ENCODE measurements at regions of chr1 and their contacts with region 1.

Region 1: GRCh38 chr1:76547916-76548315 is 319.4 kb upstream of the ST6GALNAC5 start:
- DNase-seq: peak; percentile 58
- H3K4me3 ChIP-seq: no peak overlapping the region
- H3K27ac ChIP-seq: peak overlapping the region; percentile 11
- H3K4me1 ChIP-seq: no peaks in the 10 kb centered on the region
- H3K27me3 ChIP-seq: no peaks in the 10 kb centered on the region
- CTCF ChIP-seq: no peak

Region 2: DNA sequence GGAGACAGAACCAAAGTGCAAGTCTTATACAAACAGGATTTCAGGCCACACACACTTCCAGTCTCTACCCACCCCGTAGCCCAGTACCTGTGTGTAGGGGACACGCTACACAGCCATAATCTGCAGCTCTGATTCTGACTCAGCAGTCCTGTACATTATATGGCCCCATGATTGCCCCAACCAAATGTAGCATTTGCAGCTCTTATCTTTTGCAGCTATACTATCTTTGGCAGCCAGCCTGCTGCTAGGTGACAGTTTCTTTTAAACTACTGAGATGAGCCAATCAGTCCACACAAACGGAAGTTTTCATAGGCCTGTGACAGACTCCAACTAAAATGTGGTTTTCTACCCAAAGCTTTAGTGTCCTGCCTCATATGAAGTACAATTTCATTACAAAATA is 59.8 kb after region 1 on chr1:
- intact Hi-C with region 1: loop called (anchors 10 kb)
- DNase-seq: peak; percentile 79
- H3K4me3 ChIP-seq: no peak overlapping the region
- H3K27ac ChIP-seq: no peak overlapping the region
- H3K4me1 ChIP-seq: no peaks in the 10 kb centered on the region
- H3K27me3 ChIP-seq: no peaks in the 10 kb centered on the region
- CTCF ChIP-seq: no peak